ENCODE measurements at regions of chr21 and their contacts with region 1.

Region 1: GRCh38 chr21:14864211-14865021 is 200.4 kb downstream of the NRIP1 start:
- DNase-seq: peak; percentile 81
- H3K4me3 ChIP-seq: no peak overlapping the region
- H3K27ac ChIP-seq: peak overlapping the region; percentile 16; the same call in 1 of the 2 replicates
- H3K4me1 ChIP-seq: peaks cover 14% of the 10 kb centered on the region
- H3K27me3 ChIP-seq: no peaks in the 10 kb centered on the region

Region 2: GRCh38 chr21:14356746-14357145 is 507.7 kb before region 1 on chr21:
- in situ Hi-C with region 1: no loop called
- DNase-seq: no peak
- H3K4me3 ChIP-seq: no peak overlapping the region
- H3K27ac ChIP-seq: no peak overlapping the region
- H3K4me1 ChIP-seq: no peaks in the 10 kb centered on the region
- H3K27me3 ChIP-seq: no peaks in the 10 kb centered on the region

Region 3: GRCh38 chr21:14977814-14978213 is 113.4 kb after region 1 on chr21:
- in situ Hi-C with region 1: no loop called
- DNase-seq: no peak
- H3K4me3 ChIP-seq: no peak overlapping the region
- H3K27ac ChIP-seq: no peak overlapping the region
- H3K4me1 ChIP-seq: peaks cover 15% of the 10 kb centered on the region; the same call in 1 of the 2 replicates
- H3K27me3 ChIP-seq: no peaks in the 10 kb centered on the region

Region 4: GRCh38 chr21:15483138-15483780 is 618.8 kb after region 1 on chr21:
- in situ Hi-C with region 1: loop called (anchors 25 kb)
- DNase-seq: peak; percentile 90
- H3K4me3 ChIP-seq: no peak overlapping the region
- H3K27ac ChIP-seq: no peak overlapping the region
- H3K4me1 ChIP-seq: no peaks in the 10 kb centered on the region
- H3K27me3 ChIP-seq: no peaks in the 10 kb centered on the region

Measured in GM23248 (cell line).